ENCODE measurements at regions of chr6 and their contacts with region 1.

Region 1: GRCh38 chr6:146693342-146693741 is 94.6 kb downstream of the ADGB start:
- DNase-seq: no peak
- H3K4me3 ChIP-seq: no peak overlapping the region
- H3K27ac ChIP-seq: no peak overlapping the region
- H3K4me1 ChIP-seq: no peaks in the 10 kb centered on the region
- H3K27me3 ChIP-seq: no peaks in the 10 kb centered on the region
- CTCF ChIP-seq: no peak
- EP300 ChIP-seq: no peak
- POLR2A ChIP-seq: no peak

Region 2: GRCh38 chr6:145929037-145929633 is 764.2 kb before region 1 on chr6:
- intact Hi-C with region 1: loop called (anchors 5 kb)
- DNase-seq: no peak
- H3K4me3 ChIP-seq: no peak overlapping the region
- H3K27ac ChIP-seq: no peak overlapping the region
- H3K4me1 ChIP-seq: no peaks in the 10 kb centered on the region
- H3K27me3 ChIP-seq: no peaks in the 10 kb centered on the region
- CTCF ChIP-seq: peak; percentile 54 to 69 (median 66)
- EP300 ChIP-seq: no peak
- POLR2A ChIP-seq: no peak

Region 3: DNA sequence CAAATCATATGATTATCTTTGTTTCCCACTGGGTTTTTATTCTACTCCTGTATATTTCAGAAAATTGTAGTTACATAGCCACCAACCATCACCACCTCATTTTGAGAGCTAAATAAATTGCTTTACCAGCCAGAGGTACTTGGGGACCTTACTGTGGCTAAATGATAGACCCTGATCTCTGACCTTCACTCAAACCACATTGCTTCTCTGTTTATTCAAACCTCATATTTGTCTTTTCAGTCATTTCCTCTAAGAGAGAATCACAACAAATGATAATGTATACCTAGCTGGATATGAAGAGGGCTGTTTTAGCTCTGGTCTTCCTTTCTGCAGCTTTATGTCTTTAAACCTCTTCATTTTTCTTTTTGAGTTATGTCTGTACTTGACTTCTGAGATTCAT is 48.3 kb after region 1 on chr6:
- intact Hi-C with region 1: no loop called
- DNase-seq: no peak
- H3K4me3 ChIP-seq: no peak overlapping the region
- H3K27ac ChIP-seq: no peak overlapping the region
- H3K4me1 ChIP-seq: no peaks in the 10 kb centered on the region
- H3K27me3 ChIP-seq: no peaks in the 10 kb centered on the region
- CTCF ChIP-seq: no peak
- EP300 ChIP-seq: no peak
- POLR2A ChIP-seq: no peak

Region 4: GRCh38 chr6:146813554-146813953 is 120.2 kb after region 1 on chr6:
- intact Hi-C with region 1: no loop called
- DNase-seq: no peak
- H3K4me3 ChIP-seq: no peak overlapping the region
- H3K27ac ChIP-seq: no peak overlapping the region
- H3K4me1 ChIP-seq: no peaks in the 10 kb centered on the region
- H3K27me3 ChIP-seq: no peaks in the 10 kb centered on the region
- CTCF ChIP-seq: no peak
- EP300 ChIP-seq: no peak
- POLR2A ChIP-seq: no peak

Region 5: GRCh38 chr6:146923205-146923833 is 230.0 kb after region 1 on chr6:
- intact Hi-C with region 1: no loop called
- DNase-seq: no peak
- H3K4me3 ChIP-seq: no peak overlapping the region
- H3K27ac ChIP-seq: no peak overlapping the region
- H3K4me1 ChIP-seq: no peaks in the 10 kb centered on the region
- H3K27me3 ChIP-seq: no peaks in the 10 kb centered on the region
- CTCF ChIP-seq: no peak
- EP300 ChIP-seq: no peak
- POLR2A ChIP-seq: no peak